AG04449 (cell line): ENCODE measurements at regions of chr7 and their contacts with region 1.

Region 1: GRCh38 chr7:136009488-136010079 is 32.4 kb upstream of the MTPN start:
- DNase-seq: no peak
- H3K4me3 ChIP-seq: no peak overlapping the region
- CTCF ChIP-seq: peak; percentile 39

Region 2: GRCh38 chr7:134900166-134900982 is 1109.2 kb before region 1 on chr7:
- CTCF ChIA-PET with region 1: no interaction called
- POLR2A ChIA-PET with region 1: no interaction called
- DNase-seq: no peak
- H3K4me3 ChIP-seq: no peak overlapping the region
- CTCF ChIP-seq: no peak

Region 3: DNA sequence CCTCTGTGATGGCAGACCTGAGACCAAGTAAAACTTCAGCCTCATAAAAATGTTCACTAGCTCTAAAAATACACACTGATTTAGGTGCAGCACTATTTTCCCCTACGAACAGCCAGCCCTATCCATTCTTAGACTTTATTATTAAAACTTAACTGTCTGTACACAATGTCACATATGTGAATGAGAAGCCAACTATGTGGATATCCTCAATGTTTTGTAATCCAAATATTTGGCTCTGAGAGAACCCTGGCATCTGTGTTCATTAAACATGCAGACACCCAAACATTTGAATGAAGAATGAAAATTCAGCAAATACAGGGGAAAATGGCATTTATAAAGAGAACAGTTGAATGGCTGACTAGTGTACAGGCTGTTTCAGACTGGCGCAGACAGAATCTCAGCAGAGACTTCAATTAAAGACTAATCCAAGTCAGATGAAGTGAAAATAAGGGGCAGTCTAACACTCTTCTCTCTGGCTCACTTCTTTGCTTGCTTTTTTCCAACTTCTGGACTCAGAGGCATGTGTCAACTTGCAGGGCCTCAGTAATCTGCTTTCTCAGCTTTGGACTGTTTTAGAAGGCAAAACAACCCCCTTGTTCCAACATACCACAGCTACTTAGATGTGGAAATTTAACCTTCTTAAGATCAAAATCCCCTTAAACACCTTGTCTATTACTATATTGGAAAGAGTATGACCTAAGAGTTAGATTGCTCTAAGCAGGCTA is 213.6 kb before region 1 on chr7:
- CTCF ChIA-PET with region 1: interaction called, 266 read pairs
- POLR2A ChIA-PET with region 1: no interaction called
- DNase-seq: no peak
- H3K4me3 ChIP-seq: no peak overlapping the region
- CTCF ChIP-seq: no peak

Region 4: DNA sequence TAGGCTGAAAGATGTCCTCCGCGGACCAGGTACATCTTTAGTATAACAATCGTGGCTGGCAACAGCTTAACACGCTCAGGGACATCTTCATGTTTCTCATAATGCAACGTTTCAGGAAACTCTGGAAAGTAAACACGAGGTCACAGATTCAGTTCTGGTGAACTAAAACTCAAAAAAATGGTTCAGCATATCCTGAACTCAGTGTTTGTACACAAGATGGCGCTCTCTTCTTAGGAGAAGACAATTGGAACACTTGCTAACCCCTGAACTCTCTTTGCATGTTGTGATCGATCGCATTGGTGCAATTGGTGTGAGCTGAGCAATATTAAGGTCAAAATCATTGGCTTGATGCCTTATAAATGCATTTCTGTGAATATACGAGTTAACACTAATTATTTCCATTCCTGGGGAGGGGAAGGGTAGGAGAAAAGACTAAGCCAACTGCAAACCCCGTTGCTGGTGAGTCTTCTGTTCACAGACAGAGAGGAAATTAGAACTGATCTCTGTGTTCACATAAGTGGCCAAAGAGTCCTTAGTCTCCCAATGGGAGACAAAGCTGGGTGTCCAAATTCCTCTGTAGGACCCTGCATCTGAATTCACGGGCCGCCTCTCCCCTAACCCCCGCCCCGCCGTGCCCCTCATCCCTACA is 208.4 kb before region 1 on chr7:
- CTCF ChIA-PET with region 1: interaction called, 266 read pairs
- POLR2A ChIA-PET with region 1: no interaction called
- DNase-seq: peak; percentile 5
- H3K4me3 ChIP-seq: no peak overlapping the region
- CTCF ChIP-seq: peak; percentile 68

Region 5: GRCh38 chr7:135980665-135981180 is 28.9 kb before region 1 on chr7:
- CTCF ChIA-PET with region 1: interaction called, 15 read pairs
- POLR2A ChIA-PET with region 1: no interaction called
- DNase-seq: no peak
- H3K4me3 ChIP-seq: no peak overlapping the region
- CTCF ChIP-seq: no peak

Region 6: GRCh38 chr7:135993950-135994349 is 15.6 kb before region 1 on chr7:
- CTCF ChIA-PET with region 1: interaction called, 39 read pairs
- POLR2A ChIA-PET with region 1: no interaction called
- DNase-seq: no peak
- H3K4me3 ChIP-seq: no peak overlapping the region
- CTCF ChIP-seq: no peak